ENCODE measurements at regions of chr1 and their contacts with region 1.

Region 1: DNA sequence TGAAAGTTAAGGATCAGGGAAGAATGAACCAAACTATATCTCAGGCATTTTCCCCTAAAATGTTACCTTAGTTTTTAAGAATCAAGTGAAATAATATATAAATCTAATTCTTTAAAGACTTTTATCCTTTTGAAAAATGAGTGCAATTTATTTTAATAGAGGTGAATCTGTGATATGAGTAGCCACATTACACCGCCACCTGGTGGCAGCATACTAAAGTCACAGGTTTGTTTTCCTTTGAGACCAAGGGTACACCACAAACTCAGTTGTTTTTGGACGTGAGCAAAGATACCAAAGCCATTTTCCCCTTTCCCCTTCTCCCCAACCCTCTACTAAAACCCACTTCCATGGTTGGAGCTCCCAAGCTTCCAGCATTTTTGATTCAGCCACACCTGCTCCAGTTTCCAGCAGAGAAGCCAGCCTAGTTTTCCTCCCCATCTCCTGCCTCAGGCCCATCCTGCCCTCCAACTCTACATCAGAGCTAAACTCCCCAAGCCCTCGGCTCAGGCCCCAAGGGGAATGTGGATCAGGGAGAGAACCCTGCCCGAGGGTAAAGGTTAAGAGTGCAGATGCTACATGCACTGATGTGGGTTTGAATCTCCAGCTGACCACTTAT is 22.9 kb upstream of the LDLRAP1 start:
- DNase-seq: peak; percentile 17
- ATAC-seq: peak; percentile 75
- H3K4me3 ChIP-seq: no peak overlapping the region
- H3K27ac ChIP-seq: no peak overlapping the region
- H3K4me1 ChIP-seq: no peaks in the 10 kb centered on the region
- H3K27me3 ChIP-seq: no peaks in the 10 kb centered on the region
- CTCF ChIP-seq: peak; percentile 66 to 77 (median 75); a peak in 5 of 6 replicates
- EP300 ChIP-seq: no peak
- POLR2A ChIP-seq: no peak
- RAD21 ChIP-seq: peak; percentile 72

Region 2: GRCh38 chr1:24878775-24879742 is 641.5 kb before region 1 on chr1:
- CTCF ChIA-PET with region 1: no interaction called
- POLR2A ChIA-PET with region 1: no interaction called
- RAD21 ChIA-PET with region 1: no interaction called
- SMC1A ChIA-PET with region 1: no interaction called
- in situ Hi-C with region 1: no loop called
- intact Hi-C with region 1: no loop called
- DNase-seq: no peak
- ATAC-seq: no peak
- H3K4me3 ChIP-seq: no peak overlapping the region
- H3K27ac ChIP-seq: no peak overlapping the region
- H3K4me1 ChIP-seq: no peaks in the 10 kb centered on the region
- H3K27me3 ChIP-seq: no peaks in the 10 kb centered on the region; a peak in 3 of 4 replicates
- CTCF ChIP-seq: no peak
- EP300 ChIP-seq: no peak
- POLR2A ChIP-seq: no peak
- RAD21 ChIP-seq: no peak

Region 3: GRCh38 chr1:25430666-25431505 is 89.7 kb before region 1 on chr1 and contains the start of gene MACO1:
- CTCF ChIA-PET with region 1: interaction called, 36 read pairs
- POLR2A ChIA-PET with region 1: interaction called, 3 read pairs
- RAD21 ChIA-PET with region 1: interaction called, 8 read pairs
- SMC1A ChIA-PET with region 1: interaction called, 11 read pairs
- in situ Hi-C with region 1: no loop called
- intact Hi-C with region 1: no loop called
- DNase-seq: peak; percentile 75
- ATAC-seq: peak; percentile 94
- H3K4me3 ChIP-seq: peak within 1 kb of the TSS; percentile 79
- H3K27ac ChIP-seq: peak within 1 kb of the TSS; percentile 56
- H3K4me1 ChIP-seq: peaks cover 7% of the 10 kb centered on the region
- H3K27me3 ChIP-seq: no peaks in the 10 kb centered on the region
- CTCF ChIP-seq: no peak
- EP300 ChIP-seq: no peak
- POLR2A ChIP-seq: peak; percentile 58; the same call in 1 of the 2 replicates
- RAD21 ChIP-seq: no peak
- polyA plus RNA-seq, gene MACO1: 3.2 to 4.2 TPM

Region 4: DNA sequence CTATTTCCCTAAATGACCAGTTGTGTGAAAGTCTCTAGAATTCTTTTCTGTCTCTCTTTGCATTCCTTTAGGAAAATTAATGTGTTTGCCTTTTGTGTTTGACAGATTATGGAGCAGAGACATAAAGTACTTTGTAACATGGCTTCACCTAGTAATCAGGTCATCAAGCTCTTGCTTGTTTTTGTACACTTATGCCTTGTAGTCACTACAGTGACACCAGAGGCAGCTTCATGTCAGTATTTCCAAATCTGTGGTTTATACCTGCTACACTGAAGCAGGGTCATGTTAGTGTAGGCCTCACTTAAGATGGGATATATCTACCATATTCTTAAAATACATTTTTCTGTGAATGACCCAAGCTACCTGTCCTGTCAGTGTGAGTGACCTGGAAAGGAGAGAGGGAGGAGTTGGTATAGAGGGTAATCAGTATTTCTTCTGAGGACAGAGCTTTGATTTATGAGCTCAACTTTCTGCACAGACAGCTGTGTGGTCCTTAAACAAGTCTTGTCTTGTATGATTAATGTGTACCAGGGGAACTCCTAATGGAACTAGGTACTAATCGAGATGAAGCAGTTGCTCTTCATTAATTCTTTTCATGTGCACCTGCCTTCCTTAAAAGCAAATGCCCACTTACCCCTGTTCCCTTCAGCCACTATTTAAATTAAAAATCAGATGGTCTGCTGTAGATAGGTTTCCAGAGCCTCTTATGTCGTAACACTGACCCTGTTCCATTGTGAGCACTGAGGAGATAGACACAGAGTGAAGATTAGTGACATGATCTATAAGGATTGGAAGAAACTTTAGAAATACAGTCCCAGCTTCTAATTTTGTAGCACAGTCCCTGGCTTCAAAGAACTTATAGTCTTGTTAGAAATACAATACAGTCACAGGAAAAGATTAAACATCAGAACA is 44.1 kb before region 1 on chr1:
- CTCF ChIA-PET with region 1: interaction called, 10 read pairs
- POLR2A ChIA-PET with region 1: no interaction called
- RAD21 ChIA-PET with region 1: interaction called, 5 read pairs
- SMC1A ChIA-PET with region 1: interaction called, 9 read pairs
- in situ Hi-C with region 1: no loop called
- intact Hi-C with region 1: no loop called
- DNase-seq: peak; percentile 26
- ATAC-seq: peak; percentile 55
- H3K4me3 ChIP-seq: no peak overlapping the region
- H3K27ac ChIP-seq: peak overlapping the region; percentile 13; the same call in 1 of the 2 replicates
- H3K4me1 ChIP-seq: peaks cover 13% of the 10 kb centered on the region
- H3K27me3 ChIP-seq: no peaks in the 10 kb centered on the region
- CTCF ChIP-seq: no peak
- EP300 ChIP-seq: peak in 1 of 2 experiments; percentile 68; a peak in 2 of 4 replicates
- POLR2A ChIP-seq: no peak
- RAD21 ChIP-seq: no peak

Region 5: GRCh38 chr1:25503551-25504426 is 16.8 kb before region 1 on chr1:
- CTCF ChIA-PET with region 1: interaction called, 61 read pairs
- POLR2A ChIA-PET with region 1: interaction called, 4 read pairs
- RAD21 ChIA-PET with region 1: interaction called, 4 read pairs
- SMC1A ChIA-PET with region 1: interaction called, 24 read pairs
- in situ Hi-C with region 1: no loop called
- intact Hi-C with region 1: no loop called
- DNase-seq: no peak
- ATAC-seq: peak; percentile 98
- H3K4me3 ChIP-seq: no peak overlapping the region
- H3K27ac ChIP-seq: no peak overlapping the region
- H3K4me1 ChIP-seq: no peaks in the 10 kb centered on the region
- H3K27me3 ChIP-seq: no peaks in the 10 kb centered on the region
- CTCF ChIP-seq: peak; percentile 56 to 72 (median 71)
- EP300 ChIP-seq: no peak
- POLR2A ChIP-seq: no peak
- RAD21 ChIP-seq: peak; percentile 40; the same call in 1 of the 2 replicates

Region 6: GRCh38 chr1:25549273-25550154 is 29.0 kb after region 1 on chr1:
- CTCF ChIA-PET with region 1: interaction called, 10 read pairs
- POLR2A ChIA-PET with region 1: no interaction called
- RAD21 ChIA-PET with region 1: interaction called, 16 read pairs
- SMC1A ChIA-PET with region 1: interaction called, 11 read pairs
- in situ Hi-C with region 1: no loop called
- intact Hi-C with region 1: no loop called
- DNase-seq: peak; percentile 94
- ATAC-seq: peak; percentile 95
- H3K4me3 ChIP-seq: peak overlapping the region; percentile 49; the same call in 1 of the 2 replicates
- H3K27ac ChIP-seq: peak overlapping the region; percentile 85
- H3K4me1 ChIP-seq: peaks cover 63% of the 10 kb centered on the region
- H3K27me3 ChIP-seq: no peaks in the 10 kb centered on the region
- CTCF ChIP-seq: no peak
- EP300 ChIP-seq: peak in 1 of 2 experiments; percentile 51; a peak in 1 of 4 replicates
- POLR2A ChIP-seq: peak; percentile 59
- RAD21 ChIP-seq: no peak; the same call in 1 of the 2 replicates

Region 7: GRCh38 chr1:25608488-25609178 is 88.1 kb after region 1 on chr1:
- CTCF ChIA-PET with region 1: interaction called, 17 read pairs
- POLR2A ChIA-PET with region 1: interaction called, 3 read pairs
- RAD21 ChIA-PET with region 1: interaction called, 5 read pairs
- SMC1A ChIA-PET with region 1: interaction called, 13 read pairs
- in situ Hi-C with region 1: no loop called
- intact Hi-C with region 1: no loop called
- DNase-seq: peak; percentile 38
- ATAC-seq: peak; percentile 98
- H3K4me3 ChIP-seq: no peak overlapping the region
- H3K27ac ChIP-seq: no peak overlapping the region
- H3K4me1 ChIP-seq: peaks cover 6% of the 10 kb centered on the region
- H3K27me3 ChIP-seq: peaks cover 0 to 5% of the 10 kb centered on the region in 2 experiments; a peak in 2 of 4 replicates
- CTCF ChIP-seq: peak; percentile 24 to 64 (median 33); a peak in 4 of 6 replicates
- EP300 ChIP-seq: no peak
- POLR2A ChIP-seq: no peak
- RAD21 ChIP-seq: peak; percentile 47; the same call in 1 of the 2 replicates

Region 8: DNA sequence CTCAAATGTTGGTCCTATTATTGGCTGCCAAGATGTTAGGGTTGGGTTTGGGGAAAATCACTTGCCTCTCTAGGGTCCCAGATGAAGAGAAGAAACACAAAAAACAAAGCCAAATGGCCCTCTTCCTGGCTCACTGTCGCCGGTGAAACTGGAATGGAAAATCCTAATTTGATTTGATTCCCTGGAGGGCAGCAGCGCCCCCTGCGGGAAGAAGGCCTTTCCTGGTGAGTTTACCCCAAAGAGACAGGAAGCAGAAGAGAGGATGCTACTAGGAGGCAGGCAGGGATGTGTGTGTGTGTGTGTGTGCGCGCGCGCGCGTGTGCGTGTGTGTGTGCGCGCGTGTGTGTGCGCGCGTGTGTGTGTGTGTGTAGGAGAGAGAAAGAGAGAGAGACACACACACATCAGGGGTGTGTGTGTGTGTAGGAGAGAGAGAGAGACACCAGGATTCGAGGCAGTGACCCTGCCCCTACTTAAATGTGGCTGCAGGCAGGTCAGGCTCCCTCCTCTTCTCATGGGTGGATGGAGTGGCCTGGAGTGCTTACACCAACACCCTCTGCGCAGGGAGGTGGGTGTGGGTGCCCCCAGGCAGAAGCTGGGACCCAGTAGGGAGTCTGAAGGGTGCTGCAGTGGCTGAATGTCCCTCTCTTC is 276.4 kb after region 1 on chr1:
- CTCF ChIA-PET with region 1: interaction called, 13 read pairs
- POLR2A ChIA-PET with region 1: no interaction called
- RAD21 ChIA-PET with region 1: interaction called, 4 read pairs
- SMC1A ChIA-PET with region 1: no interaction called
- in situ Hi-C with region 1: no loop called
- intact Hi-C with region 1: no loop called
- DNase-seq: no peak
- ATAC-seq: peak; percentile 70
- H3K4me3 ChIP-seq: no peak overlapping the region
- H3K27ac ChIP-seq: no peak overlapping the region
- H3K4me1 ChIP-seq: peaks cover 2% of the 10 kb centered on the region
- H3K27me3 ChIP-seq: no peaks in the 10 kb centered on the region; a peak in 1 of 4 replicates
- CTCF ChIP-seq: peak; percentile 71 to 82 (median 77)
- EP300 ChIP-seq: no peak
- POLR2A ChIP-seq: no peak
- RAD21 ChIP-seq: peak; percentile 86

Measured in GM12878 (cell line).